ENCODE measurements at regions of chr12 and their contacts with region 1.

Region 1: GRCh38 chr12:70576346-70577282 is 60.6 kb downstream of the PTPRB start:
- DNase-seq: no peak
- H3K4me3 ChIP-seq: no peak overlapping the region
- H3K27ac ChIP-seq: no peak overlapping the region
- H3K4me1 ChIP-seq: no peaks in the 10 kb centered on the region
- H3K27me3 ChIP-seq: no peaks in the 10 kb centered on the region
- CTCF ChIP-seq: peak; percentile 37 to 70 (median 54)
- EP300 ChIP-seq: no peak
- POLR2A ChIP-seq: no peak

Region 2: GRCh38 chr12:69880571-69880970 is 696.0 kb before region 1 on chr12:
- intact Hi-C with region 1: loop called in 3 of 4 experiments (anchors 5 kb)
- DNase-seq: no peak
- H3K4me3 ChIP-seq: no peak overlapping the region
- H3K27ac ChIP-seq: no peak overlapping the region
- H3K4me1 ChIP-seq: no peaks in the 10 kb centered on the region
- H3K27me3 ChIP-seq: no peaks in the 10 kb centered on the region
- CTCF ChIP-seq: no peak
- EP300 ChIP-seq: no peak
- POLR2A ChIP-seq: no peak

Region 3: GRCh38 chr12:69900720-69901131 is 675.9 kb before region 1 on chr12:
- intact Hi-C with region 1: loop called in 3 of 4 experiments (anchors 5 to 10 kb)
- DNase-seq: peak; percentile 33 to 52 (median 47)
- H3K4me3 ChIP-seq: no peak overlapping the region
- H3K27ac ChIP-seq: no peak overlapping the region
- H3K4me1 ChIP-seq: no peaks in the 10 kb centered on the region
- H3K27me3 ChIP-seq: no peaks in the 10 kb centered on the region
- CTCF ChIP-seq: peak in 1 of 3 donors; percentile 56
- EP300 ChIP-seq: no peak
- POLR2A ChIP-seq: no peak